CD14-positive monocyte (primary cell): ENCODE measurements at regions of chr10 and their contacts with region 1.

Region 1: DNA sequence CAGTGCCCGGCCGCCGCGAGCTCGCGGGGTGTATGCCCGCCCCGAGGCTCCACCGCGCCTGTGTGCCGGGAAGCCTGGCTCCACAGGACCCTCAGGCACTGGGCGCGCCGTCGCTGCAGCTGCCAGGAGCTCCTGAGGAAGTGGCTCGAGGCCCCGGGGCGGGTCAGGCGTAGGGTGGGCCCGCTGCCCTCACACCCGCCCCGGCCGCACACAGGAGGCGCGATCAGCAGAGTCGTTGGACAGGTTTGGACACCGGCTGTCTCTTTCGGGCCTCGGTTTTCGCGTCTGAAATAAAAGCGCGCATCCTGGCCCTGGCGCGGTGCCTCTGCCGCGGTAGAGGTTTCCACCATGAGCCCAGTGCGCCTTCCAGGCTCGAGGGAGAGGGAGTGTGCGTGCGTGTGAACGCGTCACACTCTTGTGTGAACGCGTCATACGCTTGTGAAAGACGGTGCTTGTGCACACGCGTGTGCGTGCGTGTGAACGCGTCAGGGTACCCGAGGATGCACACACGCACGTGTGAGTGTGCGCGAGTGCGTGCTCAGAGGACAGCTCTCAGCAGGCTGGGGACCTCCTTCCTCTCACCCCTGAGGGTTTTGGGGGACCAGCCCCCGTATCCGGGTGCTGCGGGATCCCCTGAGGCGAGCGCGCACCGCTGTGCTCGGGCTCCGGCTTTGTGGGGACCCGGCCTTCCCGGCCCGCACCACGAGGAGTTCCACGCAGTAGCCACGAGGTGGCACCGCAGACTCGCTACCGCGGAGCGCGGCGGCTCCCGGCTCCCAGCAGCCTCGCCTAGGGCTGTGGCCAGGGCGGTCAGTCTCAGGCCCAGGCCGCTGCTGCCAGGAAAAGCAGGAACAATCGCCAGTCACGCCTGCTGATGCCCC is 83.8 kb downstream of the BMS1 start:
- DNase-seq: peak; percentile 51 to 77 (median 57)
- H3K4me3 ChIP-seq: peak overlapping the region in 2 of 3 experiments; percentile 6 to 66
- H3K4me3 Mint-ChIP-seq: peak overlapping the region; percentile 65 to 92
- H3K27ac ChIP-seq: no peak overlapping the region
- H3K27ac Mint-ChIP-seq: no peak overlapping the region
- H3K4me1 ChIP-seq: peaks cover 13 to 20% of the 10 kb centered on the region in 2 donors
- H3K4me1 Mint-ChIP-seq: peaks cover 19% of the 10 kb centered on the region
- H3K27me3 ChIP-seq: peaks cover 0 to 13% of the 10 kb centered on the region in 2 donors
- H3K27me3 Mint-ChIP-seq: peaks cover 17 to 26% (median 17%) of the 10 kb centered on the region in 3 donors
- CTCF ChIP-seq: peak; percentile 74

Region 2: GRCh38 chr10:43105102-43105785 is 238.9 kb after region 1 on chr10:
- intact Hi-C with region 1: loop called (anchors 1 to 2 kb)
- DNase-seq: peak; percentile 69 to 75 (median 75)
- H3K4me3 ChIP-seq: peak overlapping the region; percentile 40 to 78 (median 43)
- H3K4me3 Mint-ChIP-seq: peak overlapping the region; percentile 80 to 92
- H3K27ac ChIP-seq: no peak overlapping the region
- H3K27ac Mint-ChIP-seq: peak overlapping the region in 4 of 7 donors; percentile 35 to 73 (median 64)
- H3K4me1 ChIP-seq: peaks cover 25 to 33% of the 10 kb centered on the region in 2 donors
- H3K4me1 Mint-ChIP-seq: peaks cover 30% of the 10 kb centered on the region
- H3K27me3 ChIP-seq: peaks cover 0 to 20% of the 10 kb centered on the region in 2 donors
- H3K27me3 Mint-ChIP-seq: peaks cover 23 to 35% (median 26%) of the 10 kb centered on the region in 3 donors
- CTCF ChIP-seq: peak; percentile 100

Region 3: GRCh38 chr10:43204943-43205671 is 338.8 kb after region 1 on chr10:
- intact Hi-C with region 1: loop called (anchors 5 to 10 kb)
- DNase-seq: peak; percentile 38 to 57 (median 44)
- H3K4me3 ChIP-seq: no peak overlapping the region
- H3K4me3 Mint-ChIP-seq: no peak overlapping the region
- H3K27ac ChIP-seq: no peak overlapping the region
- H3K27ac Mint-ChIP-seq: peak overlapping the region in 1 of 7 donors; percentile 76
- H3K4me1 ChIP-seq: peaks cover 19 to 28% of the 10 kb centered on the region in 2 donors
- H3K4me1 Mint-ChIP-seq: peaks cover 16% of the 10 kb centered on the region
- H3K27me3 ChIP-seq: no peaks in the 10 kb centered on the region
- H3K27me3 Mint-ChIP-seq: peaks cover 0 to 4% (median 0%) of the 10 kb centered on the region in 3 donors
- CTCF ChIP-seq: peak; percentile 85

Region 4: DNA sequence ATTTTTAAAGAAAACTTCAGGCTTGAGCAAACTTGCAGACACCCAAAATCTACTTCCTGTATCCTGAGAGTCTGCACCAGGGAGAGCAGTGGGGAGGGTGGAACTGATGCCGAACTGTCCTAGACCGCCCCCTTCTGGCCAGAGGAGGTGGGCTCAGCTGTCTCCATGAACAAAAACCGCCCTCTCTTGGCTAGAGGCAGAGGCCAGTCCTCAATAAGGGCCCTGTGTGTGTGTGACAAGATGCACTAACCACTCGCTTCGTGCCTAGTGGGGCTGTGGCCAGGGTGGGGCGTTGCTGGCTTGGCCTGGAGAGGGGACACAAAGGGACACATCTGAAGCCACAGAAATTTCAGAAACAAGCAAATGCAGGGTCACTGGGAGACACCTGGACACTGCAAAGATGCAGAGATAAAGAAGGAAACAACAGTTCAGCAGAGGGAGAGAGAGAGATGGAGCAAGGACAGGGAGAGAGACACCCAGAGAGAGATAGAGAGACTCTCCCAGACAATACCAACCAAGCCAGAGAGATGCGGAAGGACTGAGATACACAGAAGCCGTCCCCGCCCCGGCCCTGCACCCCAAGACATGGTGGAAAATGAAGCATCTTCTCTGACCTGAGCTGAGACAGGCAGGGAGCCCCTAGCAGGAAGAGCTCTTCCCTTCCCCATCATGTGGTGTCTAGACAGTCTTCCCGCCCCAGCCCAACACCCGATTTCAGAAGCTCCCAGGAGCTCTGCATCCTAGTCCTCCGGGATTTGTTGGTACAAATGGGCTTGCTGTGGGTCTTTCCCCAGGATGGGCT is 482.4 kb after region 1 on chr10:
- intact Hi-C with region 1: loop called in 1 of 2 experiments (anchors 5 kb)
- DNase-seq: peak; percentile 86 to 90 (median 87)
- H3K4me3 ChIP-seq: no peak overlapping the region
- H3K4me3 Mint-ChIP-seq: no peak overlapping the region
- H3K27ac ChIP-seq: no peak overlapping the region
- H3K27ac Mint-ChIP-seq: no peak overlapping the region
- H3K4me1 ChIP-seq: peaks cover 10 to 13% of the 10 kb centered on the region in 2 donors
- H3K4me1 Mint-ChIP-seq: peaks cover 15% of the 10 kb centered on the region
- H3K27me3 ChIP-seq: peaks cover 3 to 23% of the 10 kb centered on the region in 2 donors
- H3K27me3 Mint-ChIP-seq: peaks cover 24 to 36% (median 24%) of the 10 kb centered on the region in 3 donors
- CTCF ChIP-seq: peak; percentile 90

Region 5: DNA sequence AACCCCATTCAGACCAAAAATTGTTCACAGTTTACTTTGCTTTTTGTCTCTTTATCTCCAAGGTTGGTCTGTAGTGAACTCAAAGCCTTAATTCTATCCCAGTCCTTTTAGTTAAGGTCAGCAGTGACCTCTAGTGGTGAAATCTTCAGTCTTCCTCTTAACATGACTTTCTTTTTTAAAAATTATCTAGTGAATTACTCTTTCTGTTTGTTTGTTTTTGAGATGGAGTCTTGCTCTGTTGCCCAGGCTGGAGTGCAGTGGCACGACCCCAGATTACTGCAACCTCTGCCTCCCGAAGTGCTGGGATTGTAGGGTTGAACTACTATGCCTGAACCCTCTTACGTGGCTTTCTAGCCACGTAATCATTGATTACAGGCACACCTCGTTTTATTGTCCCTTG is 595.6 kb after region 1 on chr10:
- intact Hi-C with region 1: loop called in 1 of 2 experiments (anchors 10 kb)
- DNase-seq: peak; percentile 66 to 84 (median 73)
- H3K4me3 ChIP-seq: no peak overlapping the region
- H3K4me3 Mint-ChIP-seq: peak overlapping the region in 1 of 2 donors; percentile 42
- H3K27ac ChIP-seq: no peak overlapping the region
- H3K27ac Mint-ChIP-seq: peak overlapping the region in 3 of 7 donors; percentile 50 to 68 (median 65)
- H3K4me1 ChIP-seq: no peaks in the 10 kb centered on the region
- H3K4me1 Mint-ChIP-seq: peaks cover 5% of the 10 kb centered on the region
- H3K27me3 ChIP-seq: no peaks in the 10 kb centered on the region
- H3K27me3 Mint-ChIP-seq: peaks cover 0 to 4% (median 1%) of the 10 kb centered on the region in 3 donors
- CTCF ChIP-seq: peak; percentile 77

Region 6: DNA sequence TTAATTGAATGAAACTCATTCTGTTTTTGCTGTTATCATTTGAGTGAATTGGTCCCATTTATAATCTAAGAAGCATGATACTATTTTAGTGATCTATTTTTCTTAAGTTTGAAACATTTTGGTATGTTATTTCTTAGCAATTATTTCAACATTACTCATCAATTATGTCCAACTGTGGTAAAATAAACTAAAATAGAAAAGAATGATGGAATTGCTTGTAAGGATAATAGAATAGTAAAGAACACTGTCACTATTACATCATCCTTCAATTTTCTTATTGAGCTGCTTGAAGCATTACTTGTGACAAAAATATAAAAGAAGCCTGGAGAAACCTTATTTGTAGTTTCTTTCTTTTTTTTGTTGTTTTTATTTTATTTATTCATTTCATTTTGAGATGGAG is 612.9 kb after region 1 on chr10:
- intact Hi-C with region 1: loop called in 1 of 2 experiments (anchors 10 kb)
- DNase-seq: no peak
- H3K4me3 ChIP-seq: no peak overlapping the region
- H3K4me3 Mint-ChIP-seq: no peak overlapping the region
- H3K27ac ChIP-seq: no peak overlapping the region
- H3K27ac Mint-ChIP-seq: no peak overlapping the region
- H3K4me1 ChIP-seq: no peaks in the 10 kb centered on the region
- H3K4me1 Mint-ChIP-seq: no peaks in the 10 kb centered on the region
- H3K27me3 ChIP-seq: no peaks in the 10 kb centered on the region
- H3K27me3 Mint-ChIP-seq: peaks cover 0 to 4% (median 0%) of the 10 kb centered on the region in 3 donors
- CTCF ChIP-seq: no peak